CD4-positive, alpha-beta T cell (primary cell): ENCODE measurements at regions of chr1 and their contacts with region 1.

Region 1: DNA sequence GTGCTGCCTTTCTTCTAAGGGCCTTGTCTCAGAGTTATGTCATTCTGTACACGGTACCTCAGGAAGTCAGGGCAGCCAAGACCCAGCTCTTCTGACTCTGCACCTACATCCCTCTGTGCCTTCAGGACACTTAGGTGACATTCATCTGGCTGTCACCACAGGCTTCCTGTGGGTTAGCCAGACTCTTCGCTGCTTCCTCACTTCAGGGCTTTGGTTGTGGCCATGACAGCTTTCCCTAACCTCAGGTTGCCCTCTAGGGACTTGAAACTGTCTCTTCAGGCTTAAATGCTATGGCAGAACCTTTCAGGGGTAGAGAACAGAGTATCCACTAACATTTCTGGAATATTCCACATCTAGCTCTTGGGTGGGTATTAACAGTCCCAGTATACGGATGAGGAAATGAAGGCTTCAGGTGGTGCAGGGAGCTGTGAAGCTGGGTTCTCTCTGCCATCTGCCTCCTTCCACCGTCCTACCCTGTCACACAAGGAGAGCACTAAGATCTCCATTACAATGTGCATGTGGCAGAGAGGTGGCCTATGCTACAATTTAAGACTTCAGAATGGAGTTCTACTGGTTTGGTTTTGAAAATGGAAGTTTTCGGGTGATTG is 9.9 kb downstream of the TSSK3 start:
- DNase-seq: peak; percentile 34 to 88 (median 48)
- ATAC-seq: peak; percentile 85
- H3K4me3 ChIP-seq: no peak overlapping the region
- H3K4me3 Mint-ChIP-seq: no peak overlapping the region
- H3K27ac ChIP-seq: no peak overlapping the region
- H3K27ac Mint-ChIP-seq: peak overlapping the region; percentile 18
- H3K4me1 ChIP-seq: peaks cover 15% of the 10 kb centered on the region
- H3K4me1 Mint-ChIP-seq: peaks cover 28% of the 10 kb centered on the region
- H3K27me3 ChIP-seq: no peaks in the 10 kb centered on the region
- H3K27me3 Mint-ChIP-seq: no peaks in the 10 kb centered on the region
- CTCF ChIP-seq: peak; percentile 58

Region 2: DNA sequence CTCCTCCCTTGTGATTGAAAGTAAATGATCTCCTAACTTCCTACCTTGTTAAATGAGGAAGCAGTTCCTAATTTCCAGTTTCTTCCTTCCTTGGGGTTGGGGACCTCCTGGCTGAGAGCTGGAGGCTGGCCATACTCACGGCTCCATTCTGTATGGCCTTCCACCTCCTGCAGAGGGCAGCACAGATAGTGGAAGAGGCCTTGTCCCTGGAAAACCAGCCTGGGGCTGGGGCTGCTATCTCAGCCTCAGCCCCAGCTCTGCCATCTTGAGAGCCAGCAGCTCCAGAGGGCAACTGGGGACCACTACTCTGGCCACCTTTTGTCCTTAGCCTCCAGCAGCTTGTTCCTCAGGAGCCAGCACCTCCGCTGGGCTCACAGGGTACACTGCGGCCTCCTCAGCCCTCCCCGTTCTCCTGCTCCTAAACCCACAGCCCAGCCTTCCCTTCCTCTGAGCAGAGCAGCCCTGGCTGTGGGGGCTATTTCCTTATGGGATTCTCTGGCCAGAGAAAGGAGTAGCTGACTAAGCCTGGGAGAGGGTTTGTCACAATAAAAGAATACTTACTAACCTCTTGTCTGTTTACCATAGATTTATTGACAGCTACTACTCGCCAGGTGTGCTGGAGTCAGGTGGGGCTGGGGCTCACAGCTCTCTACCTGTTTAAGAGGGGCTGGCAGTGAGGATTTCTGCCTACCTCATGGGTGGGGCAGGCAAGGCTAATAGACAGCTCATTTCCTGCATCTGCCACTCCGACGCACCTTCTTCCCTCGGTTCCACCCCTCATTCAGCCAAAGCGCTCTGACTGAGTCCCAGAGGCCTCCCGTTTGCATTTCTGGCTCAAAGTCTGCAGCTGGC is 156.4 kb before region 1 on chr1:
- CTCF ChIA-PET with region 1: interaction called, 22 read pairs
- POLR2A ChIA-PET with region 1: interaction called, 14 read pairs
- intact Hi-C with region 1: loop called in 1 of 2 experiments (anchors 1 kb)
- DNase-seq: peak; percentile 33 to 81 (median 50)
- ATAC-seq: peak; percentile 96
- H3K4me3 ChIP-seq: no peak overlapping the region
- H3K4me3 Mint-ChIP-seq: no peak overlapping the region
- H3K27ac ChIP-seq: no peak overlapping the region
- H3K27ac Mint-ChIP-seq: peak overlapping the region; percentile 62
- H3K4me1 ChIP-seq: peaks cover 16% of the 10 kb centered on the region
- H3K4me1 Mint-ChIP-seq: peaks cover 13% of the 10 kb centered on the region
- H3K27me3 ChIP-seq: no peaks in the 10 kb centered on the region
- H3K27me3 Mint-ChIP-seq: no peaks in the 10 kb centered on the region
- CTCF ChIP-seq: peak; percentile 85